ENCODE measurements at regions of chr7 and their contacts with region 1.

Region 1: DNA sequence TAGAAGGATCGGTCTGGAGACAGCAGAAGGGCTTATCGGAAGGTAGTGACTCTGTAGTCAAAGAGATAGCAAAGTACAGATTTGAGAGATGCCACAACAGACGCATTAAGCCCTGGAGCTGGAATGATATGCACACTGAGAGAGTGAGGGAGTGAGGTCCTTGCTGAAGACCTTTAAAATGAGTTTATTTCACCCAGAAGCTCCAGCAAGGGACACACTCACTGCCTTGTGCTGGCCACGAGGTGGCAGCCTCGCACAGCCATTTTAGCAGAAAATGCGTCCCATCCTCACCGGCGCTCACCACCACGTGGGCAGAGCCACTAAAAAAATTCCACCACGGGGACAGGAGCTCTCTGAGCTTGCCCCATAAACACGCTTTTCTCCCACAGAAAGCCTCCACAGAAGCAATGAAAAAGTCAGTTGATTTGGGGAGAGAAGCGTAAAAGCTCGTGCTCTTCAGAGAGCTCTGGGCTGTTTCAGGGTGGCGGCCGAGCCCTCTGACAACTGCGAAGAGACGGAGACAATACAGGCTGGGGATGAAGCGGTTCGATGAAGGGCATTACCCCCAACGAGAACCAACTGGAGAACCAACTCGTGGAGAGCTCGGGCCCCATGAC is 163.0 kb upstream of the KLF14 start:
- DNase-seq: peak; percentile 82
- ATAC-seq: peak; percentile 59

Region 2: GRCh38 chr7:130277763-130278643 is 619.0 kb before region 1 on chr7:
- intact Hi-C with region 1: no loop called
- DNase-seq: no peak
- ATAC-seq: peak; percentile 64

Region 3: GRCh38 chr7:131007394-131008330 is 110.7 kb after region 1 on chr7:
- intact Hi-C with region 1: loop called (anchors 5 kb)
- DNase-seq: no peak
- ATAC-seq: peak; percentile 63

Region 4: DNA sequence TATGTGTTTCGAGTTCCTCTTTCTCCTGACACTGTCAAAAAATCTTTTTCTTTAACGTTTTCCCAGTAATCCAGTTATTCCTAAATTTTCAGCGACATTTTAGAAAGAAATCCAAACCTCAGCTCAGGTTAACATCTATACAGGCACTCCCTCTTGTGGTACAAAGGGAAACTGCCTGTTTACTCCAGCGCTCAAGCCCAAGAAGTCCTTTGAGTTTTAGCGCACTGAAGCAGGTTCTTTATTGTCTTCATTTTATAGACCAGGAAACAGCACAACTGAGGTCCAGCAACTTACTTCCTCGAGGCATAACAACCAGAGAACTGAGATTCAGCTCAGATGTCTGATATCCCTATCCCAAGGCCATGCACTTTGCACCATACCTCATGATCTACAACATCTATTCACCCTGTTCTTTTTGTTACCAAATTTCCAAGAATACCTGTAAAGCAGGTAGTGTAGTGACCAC is 143.5 kb after region 1 on chr7:
- intact Hi-C with region 1: loop called (anchors 2 kb)
- DNase-seq: no peak
- ATAC-seq: peak; percentile 53

Region 5: GRCh38 chr7:131302876-131303707 is 406.1 kb after region 1 on chr7:
- intact Hi-C with region 1: loop called (anchors 5 kb)
- DNase-seq: no peak
- ATAC-seq: peak; percentile 64